ENCODE measurements at regions of chr12 and their contacts with region 1.

Region 1: DNA sequence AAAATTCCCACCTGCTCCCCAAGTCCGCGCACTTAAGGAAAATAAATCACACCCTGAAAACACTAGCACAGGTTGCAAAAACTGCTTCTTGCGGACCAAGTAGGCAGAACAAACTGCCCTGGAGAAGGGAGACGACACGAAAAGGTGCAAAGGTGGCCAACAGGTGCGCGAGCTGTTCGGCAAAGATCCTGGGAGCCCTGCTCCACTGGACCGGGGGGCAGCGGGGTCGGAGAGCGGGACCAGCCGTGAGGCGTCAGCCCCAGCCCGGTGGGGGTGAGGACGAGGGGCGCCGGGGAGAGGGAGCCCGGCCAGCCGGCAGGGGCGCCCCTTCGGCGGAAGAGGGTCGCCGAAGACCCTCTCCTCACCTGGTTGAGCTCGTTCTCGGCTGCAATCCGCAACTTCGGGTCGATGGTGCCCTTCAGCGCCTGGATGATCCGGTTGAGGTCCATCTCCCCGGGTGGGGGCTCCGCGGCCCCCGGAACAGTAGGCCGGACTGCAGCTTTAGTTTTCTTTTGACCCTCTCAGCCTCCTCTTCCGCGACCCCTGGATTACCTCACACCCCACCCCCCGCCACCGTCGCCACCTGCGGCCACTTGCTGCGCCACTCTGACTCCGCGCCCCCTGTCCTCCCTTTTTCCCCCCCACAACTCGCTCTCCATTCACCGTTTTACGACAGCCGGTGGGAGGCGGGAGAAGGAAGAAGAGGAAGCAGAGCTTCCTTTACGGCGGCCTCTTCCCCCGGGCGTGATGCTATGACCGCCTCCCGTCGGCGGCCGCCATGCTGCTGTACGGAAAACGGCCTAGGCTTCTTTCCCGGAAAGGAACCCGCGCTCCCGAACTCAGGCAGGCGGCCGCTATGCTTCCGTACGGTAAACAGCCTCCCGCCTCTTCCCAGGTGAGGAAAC is at the start of gene IPO8:
- DNase-seq: peak; percentile 82 to 89
- ATAC-seq: peak; percentile 81 to 83
- H3K4me3 ChIP-seq: peak within 1 kb of the TSS; percentile 73 to 98 (median 96)
- H3K27ac ChIP-seq: peak within 1 kb of the TSS; percentile 86 to 91 (median 89)
- H3K4me1 ChIP-seq: peaks cover 31 to 46% of the 10 kb centered on the region in 2 donors
- H3K27me3 ChIP-seq: no peaks in the 10 kb centered on the region
- CTCF ChIP-seq: peak in 4 of 5 experiments; percentile 2 to 37 (median 21)
- POLR2A ChIP-seq: peak; percentile 10 to 21
- total RNA-seq, gene IPO8: 20.6 to 38.3 (median 26.1) TPM

Region 2: DNA sequence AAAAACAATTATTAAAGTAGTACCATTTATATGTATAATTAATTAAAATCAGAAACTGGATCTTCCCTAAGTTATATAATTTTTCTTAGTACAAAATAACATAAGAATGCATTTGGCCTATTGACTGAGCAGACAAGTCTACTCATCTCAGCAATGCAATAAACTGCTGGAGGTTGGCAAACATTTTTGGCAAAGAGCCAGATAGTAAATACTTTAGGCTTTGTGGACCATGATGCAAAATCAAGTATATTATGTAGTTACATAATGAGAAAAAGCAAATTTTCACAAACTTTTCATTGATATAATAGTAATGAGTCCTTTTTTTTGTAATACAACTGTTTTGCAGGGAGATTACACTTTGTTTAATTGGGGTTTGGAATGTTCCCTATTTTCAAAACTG is 1345.4 kb before region 1 on chr12:
- in situ Hi-C with region 1: loop called in 1 of 4 experiments (anchors 25 kb)
- intact Hi-C with region 1: no loop called
- DNase-seq: no peak
- ATAC-seq: no peak
- H3K4me3 ChIP-seq: no peak overlapping the region
- H3K27ac ChIP-seq: no peak overlapping the region
- H3K4me1 ChIP-seq: no peaks in the 10 kb centered on the region
- H3K27me3 ChIP-seq: no peaks in the 10 kb centered on the region
- CTCF ChIP-seq: no peak
- POLR2A ChIP-seq: no peak

Region 3: DNA sequence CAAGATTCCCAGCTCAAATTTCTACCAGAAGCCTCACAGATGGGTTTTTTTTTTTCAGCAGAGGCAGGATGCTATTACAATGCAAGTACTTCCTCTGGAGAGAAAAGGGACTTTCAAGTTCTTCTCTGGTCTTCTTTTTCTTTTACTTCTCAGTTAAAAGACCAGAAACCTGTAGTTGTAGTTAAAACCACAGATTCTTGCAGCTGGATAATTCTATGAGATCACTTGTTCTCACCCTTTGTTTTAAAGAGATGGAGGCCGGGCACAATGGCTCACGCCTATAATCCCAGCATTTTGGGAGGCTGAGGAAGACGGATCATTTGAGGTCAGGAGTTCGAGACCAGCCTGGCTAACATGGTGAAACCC is 1150.4 kb before region 1 on chr12:
- in situ Hi-C with region 1: no loop called
- intact Hi-C with region 1: loop called (anchors 2 kb)
- DNase-seq: no peak
- ATAC-seq: no peak
- H3K4me3 ChIP-seq: no peak overlapping the region
- H3K27ac ChIP-seq: peak overlapping the region in 2 of 4 donors; percentile 76 to 84
- H3K4me1 ChIP-seq: peaks cover 42 to 53% of the 10 kb centered on the region in 2 donors
- H3K27me3 ChIP-seq: no peaks in the 10 kb centered on the region
- CTCF ChIP-seq: no peak
- POLR2A ChIP-seq: no peak

Region 4: GRCh38 chr12:30515351-30515750 is 180.1 kb before region 1 on chr12:
- in situ Hi-C with region 1: no loop called
- intact Hi-C with region 1: no loop called
- DNase-seq: no peak
- ATAC-seq: no peak
- H3K4me3 ChIP-seq: no peak overlapping the region
- H3K27ac ChIP-seq: no peak overlapping the region
- H3K4me1 ChIP-seq: no peaks in the 10 kb centered on the region
- H3K27me3 ChIP-seq: no peaks in the 10 kb centered on the region
- CTCF ChIP-seq: no peak
- POLR2A ChIP-seq: no peak

Region 5: DNA sequence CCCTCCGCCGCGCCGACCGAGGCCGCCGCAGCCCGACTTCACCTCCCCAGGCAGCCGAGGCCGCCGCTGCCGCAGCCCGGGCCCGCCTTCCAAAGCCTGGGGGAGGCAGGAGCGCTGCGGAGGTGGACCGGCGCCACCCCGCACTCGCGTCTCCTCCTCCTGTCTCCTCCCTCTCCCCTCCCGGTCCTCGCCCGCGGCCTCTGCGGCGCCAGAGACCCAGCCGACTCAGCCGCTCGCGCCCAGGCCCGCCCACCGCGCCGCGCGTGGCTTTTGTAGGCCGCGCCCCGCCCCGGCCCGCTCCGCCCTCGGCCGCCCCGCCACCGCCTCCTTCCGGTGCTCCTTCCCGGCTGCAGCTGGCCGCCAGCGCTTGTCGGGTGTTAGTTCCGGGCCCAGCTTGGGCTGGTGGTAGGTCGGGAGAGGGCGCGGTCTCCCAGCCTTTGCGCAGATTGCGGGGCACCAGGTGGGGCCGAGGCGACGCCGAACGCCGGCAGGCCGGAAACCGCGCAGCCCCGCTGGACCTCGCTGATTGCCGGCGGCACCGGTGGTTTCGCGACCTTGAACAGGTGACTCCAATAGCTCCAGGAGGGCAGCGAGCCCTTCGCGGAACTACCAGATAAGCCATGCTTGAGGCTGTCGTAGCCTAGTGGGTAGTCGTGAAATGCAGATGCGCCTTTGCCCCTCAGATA is 59.4 kb after region 1 on chr12 and contains the start of gene CAPRIN2:
- in situ Hi-C with region 1: no loop called
- intact Hi-C with region 1: loop called (anchors 1 kb)
- DNase-seq: peak; percentile 90 to 94
- ATAC-seq: peak; percentile 93 to 96
- H3K4me3 ChIP-seq: peak within 1 kb of the TSS; percentile 58 to 94 (median 82)
- H3K27ac ChIP-seq: peak within 1 kb of the TSS; percentile 84 to 94 (median 90)
- H3K4me1 ChIP-seq: peaks cover 19 to 21% of the 10 kb centered on the region in 2 donors
- H3K27me3 ChIP-seq: no peaks in the 10 kb centered on the region
- CTCF ChIP-seq: peak in 4 of 5 experiments; percentile 44 to 53 (median 46)
- POLR2A ChIP-seq: peak; percentile 85 to 88
- total RNA-seq, gene CAPRIN2: 6.3 to 21.1 (median 7.2) TPM

Region 6: GRCh38 chr12:30806989-30807694 is 111.7 kb after region 1 on chr12:
- in situ Hi-C with region 1: no loop called
- intact Hi-C with region 1: loop called (anchors 5 kb)
- DNase-seq: peak in 1 of 2 donors; percentile 27
- ATAC-seq: peak; percentile 89 to 91
- H3K4me3 ChIP-seq: no peak overlapping the region
- H3K27ac ChIP-seq: no peak overlapping the region
- H3K4me1 ChIP-seq: peaks cover 0 to 3% of the 10 kb centered on the region in 2 donors
- H3K27me3 ChIP-seq: no peaks in the 10 kb centered on the region
- CTCF ChIP-seq: peak; percentile 43 to 74 (median 73)
- POLR2A ChIP-seq: no peak

Region 7: GRCh38 chr12:30828686-30829085 is 133.2 kb after region 1 on chr12:
- in situ Hi-C with region 1: no loop called
- intact Hi-C with region 1: no loop called
- DNase-seq: no peak
- ATAC-seq: no peak
- H3K4me3 ChIP-seq: no peak overlapping the region
- H3K27ac ChIP-seq: no peak overlapping the region
- H3K4me1 ChIP-seq: no peaks in the 10 kb centered on the region
- H3K27me3 ChIP-seq: no peaks in the 10 kb centered on the region
- CTCF ChIP-seq: no peak
- POLR2A ChIP-seq: no peak

Region 8: GRCh38 chr12:31728917-31729640 is 1033.6 kb after region 1 on chr12 and contains the start of gene AMN1:
- in situ Hi-C with region 1: no loop called
- intact Hi-C with region 1: loop called (anchors 10 kb)
- DNase-seq: peak; percentile 94 to 99
- ATAC-seq: peak; percentile 88 to 91
- H3K4me3 ChIP-seq: peak within 1 kb of the TSS; percentile 72 to 89 (median 79)
- H3K27ac ChIP-seq: peak within 1 kb of the TSS; percentile 91 to 97 (median 94)
- H3K4me1 ChIP-seq: peaks cover 50 to 54% of the 10 kb centered on the region in 2 donors
- H3K27me3 ChIP-seq: no peaks in the 10 kb centered on the region
- CTCF ChIP-seq: peak in 1 of 5 experiments; percentile 32
- POLR2A ChIP-seq: peak; percentile 75 to 92
- total RNA-seq, gene AMN1: 14.9 to 27.2 (median 18.6) TPM